ENCODE measurements at regions of chr15 and their contacts with region 1.

Region 1: GRCh38 chr15:68304589-68305337 is 27.2 kb downstream of the FEM1B start:
- DNase-seq: no peak
- ATAC-seq: no peak
- H3K4me3 Mint-ChIP-seq: no peak overlapping the region
- H3K27ac Mint-ChIP-seq: no peak overlapping the region
- H3K4me1 Mint-ChIP-seq: peaks cover 20% of the 10 kb centered on the region
- H3K27me3 Mint-ChIP-seq: peaks cover 5% of the 10 kb centered on the region

Region 2: DNA sequence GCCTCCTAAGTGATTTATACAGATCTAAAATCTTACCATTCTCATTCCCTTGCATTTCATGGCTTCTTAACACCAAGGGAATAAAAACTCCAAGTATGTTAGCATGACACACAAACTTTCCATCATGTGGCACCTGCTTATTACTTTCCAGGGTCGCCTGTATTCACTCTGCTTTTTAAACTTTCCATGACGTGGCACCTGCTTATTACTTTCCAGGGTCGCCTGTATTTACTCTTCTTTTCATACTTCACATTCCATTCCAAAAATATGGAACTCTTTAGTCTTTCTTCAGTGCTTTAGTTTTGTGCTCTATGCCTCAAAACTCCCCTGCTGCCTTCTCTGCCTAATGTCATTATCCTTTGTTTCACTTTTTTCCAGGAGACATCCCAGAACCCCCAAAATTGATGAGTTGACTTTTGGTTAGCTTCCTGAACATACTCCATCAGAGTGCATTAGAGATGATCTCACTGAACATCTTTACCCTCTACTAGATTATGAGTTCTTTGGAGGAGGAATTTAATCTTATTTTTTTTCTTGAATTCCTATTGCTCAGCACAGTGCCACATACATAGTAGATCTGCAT is 146.6 kb before region 1 on chr15:
- CTCF ChIA-PET with region 1: no interaction called
- POLR2A ChIA-PET with region 1: no interaction called
- DNase-seq: no peak
- ATAC-seq: no peak
- H3K4me3 Mint-ChIP-seq: no peak overlapping the region
- H3K27ac Mint-ChIP-seq: no peak overlapping the region
- H3K4me1 Mint-ChIP-seq: no peaks in the 10 kb centered on the region
- H3K27me3 Mint-ChIP-seq: no peaks in the 10 kb centered on the region

Region 3: DNA sequence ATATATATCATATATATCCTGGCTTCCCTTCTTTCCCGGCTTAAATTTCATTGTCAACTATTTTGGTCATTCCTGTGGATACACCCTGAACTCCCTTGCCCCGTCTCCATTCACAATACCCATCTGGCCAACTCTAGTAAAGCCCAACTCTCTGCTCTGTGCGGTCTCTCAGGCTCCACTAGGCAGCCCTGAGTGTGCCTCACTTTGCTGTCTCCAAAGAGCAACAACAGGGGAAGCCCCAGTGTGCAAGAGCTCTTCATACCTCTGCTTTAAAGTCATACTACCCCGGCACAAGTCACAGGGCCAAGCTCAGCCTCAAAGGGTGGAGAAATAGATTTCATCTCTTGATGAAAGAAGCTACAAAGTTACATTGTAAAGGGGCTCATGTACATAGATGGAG is 46.1 kb before region 1 on chr15:
- CTCF ChIA-PET with region 1: interaction called, 152 read pairs
- POLR2A ChIA-PET with region 1: no interaction called
- DNase-seq: no peak
- ATAC-seq: no peak
- H3K4me3 Mint-ChIP-seq: no peak overlapping the region
- H3K27ac Mint-ChIP-seq: no peak overlapping the region
- H3K4me1 Mint-ChIP-seq: peaks cover 12% of the 10 kb centered on the region
- H3K27me3 Mint-ChIP-seq: peaks cover 25% of the 10 kb centered on the region

Region 4: DNA sequence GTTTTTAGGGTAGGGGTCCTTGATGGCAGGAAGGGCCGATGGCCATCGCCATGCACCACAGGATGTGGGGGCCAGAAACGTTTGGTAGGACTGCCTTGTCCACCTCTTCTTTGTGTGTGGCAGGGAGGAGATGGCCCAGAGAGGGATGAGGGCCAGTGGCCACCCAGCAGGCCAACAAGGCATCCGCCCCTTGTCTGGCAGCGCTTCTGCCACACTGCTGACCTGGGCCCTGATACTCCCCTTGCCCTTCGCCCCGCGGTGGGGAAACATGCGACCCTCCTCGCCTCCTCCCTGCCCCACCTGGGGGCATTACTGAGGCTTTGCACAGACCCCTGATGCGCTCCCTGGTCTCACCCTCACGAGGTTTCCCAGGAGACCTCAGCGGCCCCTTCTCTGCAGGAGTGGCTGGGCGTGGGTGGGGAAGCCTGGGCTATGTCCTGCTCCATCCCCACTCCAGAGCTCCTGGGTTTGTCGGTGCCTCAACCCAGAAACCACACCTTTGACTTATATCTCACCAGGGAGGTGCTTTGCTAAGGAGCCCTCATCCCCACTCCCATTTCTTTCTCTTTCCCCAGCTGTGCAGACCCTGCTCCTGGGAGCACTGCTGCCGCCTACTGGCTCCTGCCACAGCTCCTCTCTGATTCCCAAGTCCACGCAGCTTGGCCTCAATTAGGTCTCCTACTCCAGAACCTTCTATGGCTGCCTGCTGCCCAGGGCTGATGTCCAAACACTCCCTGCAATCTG is 11.5 kb after region 1 on chr15:
- CTCF ChIA-PET with region 1: interaction called, 19 read pairs
- POLR2A ChIA-PET with region 1: interaction called, 3 read pairs
- DNase-seq: no peak
- ATAC-seq: no peak
- H3K4me3 Mint-ChIP-seq: no peak overlapping the region
- H3K27ac Mint-ChIP-seq: no peak overlapping the region
- H3K4me1 Mint-ChIP-seq: no peaks in the 10 kb centered on the region
- H3K27me3 Mint-ChIP-seq: peaks cover 2% of the 10 kb centered on the region

Region 5: DNA sequence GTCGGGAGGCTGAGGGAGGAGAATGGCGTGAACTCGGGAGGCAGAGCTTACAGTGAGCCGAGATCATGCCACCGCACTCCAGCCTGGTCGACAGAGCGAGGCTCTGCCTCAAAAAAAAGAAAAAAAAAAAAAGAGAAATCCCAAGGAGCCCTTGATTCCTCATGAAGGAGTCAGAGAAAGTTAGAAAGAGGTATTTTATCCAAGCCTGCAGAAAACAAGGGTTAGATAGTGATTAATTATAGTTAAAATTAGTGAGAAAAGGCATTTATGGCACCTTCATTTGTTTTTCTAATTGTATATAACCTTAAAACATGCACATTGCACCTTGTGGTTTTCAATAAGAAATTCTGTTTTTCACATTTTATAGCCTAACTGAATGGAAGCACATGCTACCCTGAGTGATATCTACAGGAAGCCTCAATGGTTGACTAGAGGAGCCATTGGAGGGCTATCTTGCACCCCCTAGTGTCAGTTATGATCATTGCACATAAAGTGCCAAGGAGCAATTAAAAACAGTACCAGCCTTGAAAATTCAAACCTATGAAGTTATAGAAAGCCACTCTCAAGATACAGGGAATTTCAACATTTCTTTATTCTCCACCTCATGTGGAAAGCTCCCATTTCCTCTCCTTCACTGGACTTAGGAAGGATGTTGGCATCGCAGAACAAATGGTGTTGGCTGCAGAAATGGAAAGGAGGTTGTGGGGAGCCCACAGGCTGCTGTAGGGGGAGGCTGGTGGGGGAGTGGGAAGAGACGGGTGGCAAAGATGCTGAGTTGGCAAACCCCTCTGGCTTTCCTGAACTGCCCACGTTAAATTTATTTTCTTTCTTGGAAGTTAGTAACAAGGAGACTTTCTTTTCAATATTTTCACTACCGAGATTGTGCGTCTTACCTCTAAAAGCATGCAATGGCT is 78.7 kb after region 1 on chr15:
- CTCF ChIA-PET with region 1: interaction called, 143 read pairs
- POLR2A ChIA-PET with region 1: no interaction called
- DNase-seq: peak; percentile 70
- ATAC-seq: peak; percentile 57
- H3K4me3 Mint-ChIP-seq: no peak overlapping the region
- H3K27ac Mint-ChIP-seq: no peak overlapping the region
- H3K4me1 Mint-ChIP-seq: peaks cover 25% of the 10 kb centered on the region
- H3K27me3 Mint-ChIP-seq: no peaks in the 10 kb centered on the region

Region 6: GRCh38 chr15:68536331-68537095 is 231.8 kb after region 1 on chr15:
- CTCF ChIA-PET with region 1: interaction called, 18 read pairs
- POLR2A ChIA-PET with region 1: no interaction called
- DNase-seq: no peak
- ATAC-seq: no peak
- H3K4me3 Mint-ChIP-seq: no peak overlapping the region
- H3K27ac Mint-ChIP-seq: no peak overlapping the region
- H3K4me1 Mint-ChIP-seq: peaks cover 2% of the 10 kb centered on the region
- H3K27me3 Mint-ChIP-seq: peaks cover 21% of the 10 kb centered on the region

Measured in activated CD8-positive, alpha-beta T cell treated with anti-CD3 and anti-CD28 coated beads, Interleukin-2, amount 10 ng/mL, durations not matched to agents 7 days and 5 days (primary cell).